Activated CD4-positive, alpha-beta memory T cell treated with anti-CD3 and anti-CD28 coated beads, Interleukin-2, amount 10 ng/mL, durations not matched to agents 7 days and 5 days (primary cell): ENCODE measurements at regions of chr14 and their contacts with region 1.

Region 1: DNA sequence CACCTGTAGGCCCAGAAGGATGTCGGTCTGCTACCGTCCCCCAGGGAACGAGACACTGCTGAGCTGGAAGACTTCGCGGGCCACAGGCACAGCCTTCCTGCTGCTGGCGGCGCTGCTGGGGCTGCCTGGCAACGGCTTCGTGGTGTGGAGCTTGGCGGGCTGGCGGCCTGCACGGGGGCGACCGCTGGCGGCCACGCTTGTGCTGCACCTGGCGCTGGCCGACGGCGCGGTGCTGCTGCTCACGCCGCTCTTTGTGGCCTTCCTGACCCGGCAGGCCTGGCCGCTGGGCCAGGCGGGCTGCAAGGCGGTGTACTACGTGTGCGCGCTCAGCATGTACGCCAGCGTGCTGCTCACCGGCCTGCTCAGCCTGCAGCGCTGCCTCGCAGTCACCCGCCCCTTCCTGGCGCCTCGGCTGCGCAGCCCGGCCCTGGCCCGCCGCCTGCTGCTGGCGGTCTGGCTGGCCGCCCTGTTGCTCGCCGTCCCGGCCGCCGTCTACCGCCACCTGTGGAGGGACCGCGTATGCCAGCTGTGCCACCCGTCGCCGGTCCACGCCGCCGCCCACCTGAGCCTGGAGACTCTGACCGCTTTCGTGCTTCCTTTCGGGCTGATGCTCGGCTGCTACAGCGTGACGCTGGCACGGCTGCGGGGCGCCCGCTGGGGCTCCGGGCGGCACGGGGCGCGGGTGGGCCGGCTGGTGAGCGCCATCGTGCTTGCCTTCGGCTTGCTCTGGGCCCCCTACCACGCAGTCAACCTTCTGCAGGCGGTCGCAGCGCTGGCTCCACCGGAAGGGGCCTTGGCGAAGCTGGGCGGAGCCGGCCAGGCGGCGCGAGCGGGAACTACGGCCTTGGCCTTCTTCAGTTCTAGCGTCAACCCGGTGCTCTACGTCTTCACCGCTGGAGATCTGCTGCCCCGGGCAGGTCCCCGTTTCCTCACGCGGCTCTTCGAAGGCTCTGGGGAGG is at the start of gene LTB4R:
- DNase-seq: peak; percentile 76
- H3K4me3 Mint-ChIP-seq: peak within 1 kb of the TSS; percentile 87
- H3K27ac Mint-ChIP-seq: peak within 1 kb of the TSS; percentile 96
- H3K4me1 Mint-ChIP-seq: peaks cover 75% of the 10 kb centered on the region
- H3K27me3 Mint-ChIP-seq: no peaks in the 10 kb centered on the region
- total RNA-seq, gene LTB4R: 36.1 to 37.9 TPM

Region 2: GRCh38 chr14:24232121-24232644 is 78.7 kb before region 1 on chr14 and contains the start of gene NEDD8:
- CTCF ChIA-PET with region 1: interaction called, 10 read pairs
- POLR2A ChIA-PET with region 1: interaction called, 3 read pairs
- DNase-seq: peak; percentile 92
- H3K4me3 Mint-ChIP-seq: peak within 1 kb of the TSS; percentile 81
- H3K27ac Mint-ChIP-seq: peak within 1 kb of the TSS; percentile 83
- H3K4me1 Mint-ChIP-seq: peaks cover 59% of the 10 kb centered on the region
- H3K27me3 Mint-ChIP-seq: no peaks in the 10 kb centered on the region
- total RNA-seq, gene NEDD8: 190 to 197 TPM

Region 3: GRCh38 chr14:24259252-24259995 is 51.5 kb before region 1 on chr14:
- CTCF ChIA-PET with region 1: no interaction called
- POLR2A ChIA-PET with region 1: no interaction called
- DNase-seq: no peak
- H3K4me3 Mint-ChIP-seq: no peak overlapping the region
- H3K27ac Mint-ChIP-seq: no peak overlapping the region
- H3K4me1 Mint-ChIP-seq: no peaks in the 10 kb centered on the region
- H3K27me3 Mint-ChIP-seq: no peaks in the 10 kb centered on the region

Region 4: DNA sequence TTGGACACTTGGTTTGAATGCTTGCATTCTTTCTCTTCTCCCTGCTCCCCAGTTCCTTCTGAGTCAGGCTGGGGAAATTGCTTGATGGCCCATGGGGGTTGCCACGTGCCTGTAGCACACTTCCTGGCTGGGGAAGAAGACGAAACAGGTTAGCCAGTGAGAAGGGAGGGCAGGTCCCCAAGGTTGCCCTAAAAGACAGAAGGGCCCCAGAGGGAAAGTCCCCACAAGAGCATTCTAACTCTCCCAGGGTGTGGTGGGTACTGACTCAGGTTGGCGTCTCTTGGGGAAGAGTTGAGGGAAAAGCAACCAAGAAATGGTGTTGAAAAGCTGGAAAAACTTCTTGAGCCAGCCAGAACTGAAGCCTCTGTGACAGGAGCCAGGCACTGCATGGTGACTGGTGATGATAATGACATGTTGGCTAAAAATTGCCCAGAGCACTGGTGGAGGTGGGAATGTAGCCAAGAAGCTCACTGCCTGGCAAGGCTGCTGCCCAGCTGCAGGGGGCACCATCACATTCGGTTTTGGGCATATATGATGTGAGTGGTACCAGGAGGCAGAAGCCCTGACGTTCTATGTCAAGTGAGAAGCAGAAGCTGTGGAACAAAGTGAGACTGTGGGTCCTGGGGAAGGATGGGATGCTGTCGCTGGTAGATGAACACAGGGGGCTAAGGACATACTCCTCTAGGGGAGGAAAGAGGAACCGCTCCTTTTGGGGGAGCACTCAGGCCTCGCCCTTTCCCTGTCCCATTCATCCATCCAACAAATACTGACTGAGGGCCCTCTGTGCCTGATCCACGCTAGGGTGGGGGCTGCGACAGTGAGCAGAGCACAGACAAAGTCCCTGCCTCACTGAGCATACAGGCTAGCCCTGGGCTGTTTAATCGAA is 31.4 kb before region 1 on chr14:
- CTCF ChIA-PET with region 1: interaction called, 17 read pairs
- POLR2A ChIA-PET with region 1: interaction called, 5 read pairs
- DNase-seq: peak; percentile 50
- H3K4me3 Mint-ChIP-seq: no peak overlapping the region
- H3K27ac Mint-ChIP-seq: no peak overlapping the region
- H3K4me1 Mint-ChIP-seq: peaks cover 25% of the 10 kb centered on the region
- H3K27me3 Mint-ChIP-seq: peaks cover 5% of the 10 kb centered on the region

Region 5: GRCh38 chr14:24299255-24300195 is 11.4 kb before region 1 on chr14 and contains the starts of genes DHRS1 and NOP9:
- CTCF ChIA-PET with region 1: interaction called, 92 read pairs
- POLR2A ChIA-PET with region 1: interaction called, 97 read pairs
- DNase-seq: peak; percentile 94
- H3K4me3 Mint-ChIP-seq: peak within 1 kb of the TSS; percentile 84
- H3K27ac Mint-ChIP-seq: peak within 1 kb of the TSS; percentile 84
- H3K4me1 Mint-ChIP-seq: peaks cover 60% of the 10 kb centered on the region
- H3K27me3 Mint-ChIP-seq: no peaks in the 10 kb centered on the region
- total RNA-seq, gene DHRS1: 31.6 to 33.4 TPM
- total RNA-seq, gene NOP9: 25.8 to 27.7 TPM

Region 6: GRCh38 chr14:24332268-24332993 is 21.5 kb after region 1 on chr14:
- CTCF ChIA-PET with region 1: interaction called, 144 read pairs
- POLR2A ChIA-PET with region 1: interaction called, 65 read pairs
- DNase-seq: peak; percentile 89
- H3K4me3 Mint-ChIP-seq: peak overlapping the region; percentile 71
- H3K27ac Mint-ChIP-seq: peak overlapping the region; percentile 61
- H3K4me1 Mint-ChIP-seq: peaks cover 81% of the 10 kb centered on the region
- H3K27me3 Mint-ChIP-seq: peaks cover 35% of the 10 kb centered on the region

Region 7: DNA sequence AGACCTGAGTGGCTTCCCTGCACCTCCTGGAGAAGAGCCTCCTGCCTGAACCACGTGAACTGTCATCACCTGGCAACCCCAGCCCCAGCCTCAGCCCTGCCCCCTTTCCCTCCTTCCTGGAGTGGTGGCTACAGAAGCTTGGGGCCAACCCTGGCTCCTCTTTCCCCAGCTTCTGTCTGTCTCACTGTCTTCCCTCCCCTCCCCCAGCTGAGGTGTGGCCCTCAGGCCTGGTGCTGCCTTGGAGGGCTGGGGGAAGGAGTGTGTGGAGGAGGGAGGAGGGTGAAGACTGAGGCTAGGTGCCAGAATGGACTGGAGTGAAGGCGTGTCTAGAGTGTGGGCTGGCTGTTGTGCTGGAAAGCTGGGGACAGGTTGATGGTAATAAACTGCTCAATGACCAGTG is 66.7 kb after region 1 on chr14:
- CTCF ChIA-PET with region 1: no interaction called
- POLR2A ChIA-PET with region 1: no interaction called
- DNase-seq: no peak
- H3K4me3 Mint-ChIP-seq: no peak overlapping the region
- H3K27ac Mint-ChIP-seq: no peak overlapping the region
- H3K4me1 Mint-ChIP-seq: peaks cover 4% of the 10 kb centered on the region
- H3K27me3 Mint-ChIP-seq: peaks cover 2% of the 10 kb centered on the region